Ascending aorta (tissue), 2 donors: ENCODE measurements at regions of chr10 and their contacts with region 1.

Region 1: GRCh38 chr10:121608469-121609190 is 10.4 kb upstream of the FGFR2 start:
- DNase-seq: no peak
- H3K4me3 ChIP-seq: peak overlapping the region; percentile 41 to 70
- H3K27ac ChIP-seq: no peak overlapping the region
- H3K4me1 ChIP-seq: no peaks in the 10 kb centered on the region
- H3K27me3 ChIP-seq: no peaks in the 10 kb centered on the region
- CTCF ChIP-seq: peak; percentile 53 to 92 (median 75)

Region 2: GRCh38 chr10:120948889-120949608 is 659.6 kb before region 1 on chr10:
- intact Hi-C with region 1: loop called (anchors 1 kb)
- DNase-seq: peak in 1 of 2 donors; percentile 72
- H3K4me3 ChIP-seq: peak overlapping the region; percentile 45 to 67
- H3K27ac ChIP-seq: no peak overlapping the region
- H3K4me1 ChIP-seq: peaks cover 7 to 10% of the 10 kb centered on the region in 2 donors
- H3K27me3 ChIP-seq: no peaks in the 10 kb centered on the region
- CTCF ChIP-seq: peak; percentile 70 to 95 (median 86)

Region 3: DNA sequence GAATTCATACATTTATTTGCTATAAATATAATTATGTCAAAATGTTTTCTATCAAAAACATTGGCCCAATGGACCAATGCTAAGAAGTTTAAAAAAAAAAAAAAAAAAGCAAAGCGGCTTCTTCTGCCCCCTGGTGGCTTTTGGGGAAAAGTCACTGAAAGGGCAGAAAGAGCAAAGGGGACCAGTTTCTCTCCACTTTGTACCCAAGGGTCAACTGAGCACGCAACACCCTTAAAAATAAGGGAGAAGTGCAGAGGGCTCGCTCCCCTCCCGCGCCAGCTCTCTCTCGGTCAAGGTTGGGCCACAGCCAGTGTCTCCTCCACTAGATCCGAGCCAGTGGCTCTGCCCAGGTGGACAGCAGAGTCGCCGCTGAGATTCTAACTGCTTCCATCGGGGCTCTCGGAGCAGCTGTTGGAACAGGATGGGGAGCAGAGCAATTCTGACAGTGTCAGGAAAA is 126.0 kb after region 1 on chr10:
- intact Hi-C with region 1: loop called (anchors 10 kb)
- DNase-seq: no peak
- H3K4me3 ChIP-seq: no peak overlapping the region
- H3K27ac ChIP-seq: no peak overlapping the region
- H3K4me1 ChIP-seq: no peaks in the 10 kb centered on the region
- H3K27me3 ChIP-seq: no peaks in the 10 kb centered on the region
- CTCF ChIP-seq: peak; percentile 4 to 64 (median 53)

Region 4: GRCh38 chr10:121804460-121804859 is 195.8 kb after region 1 on chr10:
- intact Hi-C with region 1: no loop called
- DNase-seq: no peak
- H3K4me3 ChIP-seq: no peak overlapping the region
- H3K27ac ChIP-seq: no peak overlapping the region
- H3K4me1 ChIP-seq: no peaks in the 10 kb centered on the region
- H3K27me3 ChIP-seq: no peaks in the 10 kb centered on the region
- CTCF ChIP-seq: no peak

Region 5: DNA sequence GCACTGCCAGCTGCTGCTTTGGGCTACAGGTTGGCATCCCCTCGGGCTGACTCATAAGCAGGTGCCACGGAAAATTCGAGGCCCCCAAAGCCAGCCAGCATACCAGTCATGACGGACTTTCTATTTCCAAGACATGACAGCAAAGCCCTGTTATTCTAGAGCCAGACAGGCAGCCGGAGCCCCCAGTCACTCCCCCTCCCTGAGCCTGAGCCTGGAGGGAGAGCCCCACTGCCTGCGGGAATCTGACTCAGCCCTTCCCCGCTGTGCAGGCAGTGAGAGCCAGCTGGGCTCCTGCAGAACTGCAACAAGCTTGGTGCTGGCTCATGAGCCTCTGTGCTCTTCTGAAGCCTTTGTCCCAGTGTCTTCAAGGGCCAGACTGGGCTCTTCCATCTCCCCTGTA is 678.2 kb after region 1 on chr10:
- intact Hi-C with region 1: no loop called
- DNase-seq: peak; percentile 74 to 89
- H3K4me3 ChIP-seq: no peak overlapping the region
- H3K27ac ChIP-seq: peak overlapping the region; percentile 67 to 73
- H3K4me1 ChIP-seq: peaks cover 6 to 15% of the 10 kb centered on the region in 2 donors
- H3K27me3 ChIP-seq: no peaks in the 10 kb centered on the region
- CTCF ChIP-seq: no peak